PC-3 (cell line): ENCODE measurements at regions of chr11 and their contacts with region 1.

Region 1: DNA sequence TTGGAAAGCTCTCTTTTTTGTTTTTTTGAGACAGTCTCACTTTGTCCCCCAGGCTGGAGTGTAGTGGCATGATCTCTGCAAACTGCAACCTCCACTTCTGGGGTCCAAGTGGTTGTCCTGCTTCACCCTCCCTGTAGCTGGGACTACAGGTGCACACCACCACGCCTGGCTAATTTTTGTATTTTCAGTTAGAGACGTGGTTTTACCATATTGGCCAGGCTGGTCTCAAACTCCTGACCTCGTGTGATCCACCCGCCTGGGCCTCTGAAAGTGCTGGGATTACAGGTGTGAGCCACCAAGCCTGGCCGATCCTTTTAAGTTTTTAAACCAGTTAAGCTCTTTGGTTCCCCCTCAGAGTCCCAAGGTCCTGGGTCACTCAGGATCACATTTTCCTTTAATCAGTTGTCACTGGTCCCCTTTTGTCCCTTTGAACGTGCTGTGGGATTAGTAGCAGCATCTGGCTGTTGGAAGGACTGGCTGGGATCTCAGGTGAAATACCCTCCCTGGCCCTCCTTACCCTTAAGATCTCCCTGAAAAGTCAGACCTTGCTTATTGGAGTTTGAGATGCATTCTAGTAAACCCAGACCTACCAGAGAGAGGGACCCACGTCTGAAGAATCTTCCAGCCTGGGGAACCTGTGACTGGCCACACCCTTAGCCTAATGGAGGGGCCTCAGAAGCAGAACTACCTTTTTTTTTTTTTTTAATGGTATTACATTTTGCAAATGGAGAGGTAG is 8.1 kb downstream of the MALAT1 start:
- DNase-seq: peak; percentile 56
- ATAC-seq: peak; percentile 42
- H3K4me3 ChIP-seq: no peak overlapping the region
- H3K27ac ChIP-seq: peak overlapping the region; percentile 52
- H3K4me1 ChIP-seq: peaks cover 45% of the 10 kb centered on the region
- H3K27me3 ChIP-seq: no peaks in the 10 kb centered on the region
- CTCF ChIP-seq: no peak

Region 2: GRCh38 chr11:65251476-65251875 is 255.5 kb before region 1 on chr11:
- CTCF ChIA-PET with region 1: no interaction called
- POLR2A ChIA-PET with region 1: interaction called, 10 read pairs
- intact Hi-C with region 1: no loop called
- DNase-seq: peak; percentile 19
- ATAC-seq: no peak
- H3K4me3 ChIP-seq: no peak overlapping the region
- H3K27ac ChIP-seq: no peak overlapping the region
- H3K4me1 ChIP-seq: no peaks in the 10 kb centered on the region; the same call in 1 of the 2 replicates
- H3K27me3 ChIP-seq: no peaks in the 10 kb centered on the region
- CTCF ChIP-seq: no peak

Region 3: DNA sequence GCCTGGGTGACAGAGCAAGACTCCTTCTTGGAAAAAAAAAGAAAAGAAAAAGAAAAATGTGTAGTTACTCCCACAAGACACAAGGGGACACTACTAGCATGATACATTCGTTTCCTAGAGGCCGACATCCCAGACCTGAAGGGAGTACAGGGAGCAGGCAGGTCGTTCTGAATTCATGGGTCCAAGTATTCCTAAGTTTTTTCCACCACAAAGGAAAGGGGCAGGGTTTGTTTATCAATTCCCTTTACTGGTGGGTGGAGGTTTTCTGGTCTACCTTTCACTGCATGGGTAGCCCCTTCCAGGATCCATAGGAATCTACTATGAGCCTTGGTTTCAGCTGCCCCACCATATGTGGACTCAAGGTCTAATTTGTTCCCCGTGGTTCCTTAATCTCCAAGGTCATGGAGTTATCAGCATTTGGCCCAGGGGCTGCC is 140.6 kb before region 1 on chr11:
- CTCF ChIA-PET with region 1: no interaction called
- POLR2A ChIA-PET with region 1: no interaction called
- intact Hi-C with region 1: loop called (anchors 1 kb)
- DNase-seq: peak; percentile 86
- ATAC-seq: peak; percentile 63
- H3K4me3 ChIP-seq: no peak overlapping the region
- H3K27ac ChIP-seq: peak overlapping the region; percentile 6; the same call in 1 of the 2 replicates
- H3K4me1 ChIP-seq: peaks cover 8% of the 10 kb centered on the region
- H3K27me3 ChIP-seq: no peaks in the 10 kb centered on the region
- CTCF ChIP-seq: peak; percentile 75

Region 4: GRCh38 chr11:65418711-65419459 is 88.1 kb before region 1 on chr11:
- CTCF ChIA-PET with region 1: interaction called, 6 read pairs
- POLR2A ChIA-PET with region 1: interaction called, 46 read pairs
- intact Hi-C with region 1: loop called (anchors 1 kb)
- DNase-seq: peak; percentile 98
- ATAC-seq: peak; percentile 25
- H3K4me3 ChIP-seq: peak overlapping the region; percentile 41
- H3K27ac ChIP-seq: peak overlapping the region; percentile 99
- H3K4me1 ChIP-seq: peaks cover 53% of the 10 kb centered on the region
- H3K27me3 ChIP-seq: no peaks in the 10 kb centered on the region
- CTCF ChIP-seq: no peak

Region 5: DNA sequence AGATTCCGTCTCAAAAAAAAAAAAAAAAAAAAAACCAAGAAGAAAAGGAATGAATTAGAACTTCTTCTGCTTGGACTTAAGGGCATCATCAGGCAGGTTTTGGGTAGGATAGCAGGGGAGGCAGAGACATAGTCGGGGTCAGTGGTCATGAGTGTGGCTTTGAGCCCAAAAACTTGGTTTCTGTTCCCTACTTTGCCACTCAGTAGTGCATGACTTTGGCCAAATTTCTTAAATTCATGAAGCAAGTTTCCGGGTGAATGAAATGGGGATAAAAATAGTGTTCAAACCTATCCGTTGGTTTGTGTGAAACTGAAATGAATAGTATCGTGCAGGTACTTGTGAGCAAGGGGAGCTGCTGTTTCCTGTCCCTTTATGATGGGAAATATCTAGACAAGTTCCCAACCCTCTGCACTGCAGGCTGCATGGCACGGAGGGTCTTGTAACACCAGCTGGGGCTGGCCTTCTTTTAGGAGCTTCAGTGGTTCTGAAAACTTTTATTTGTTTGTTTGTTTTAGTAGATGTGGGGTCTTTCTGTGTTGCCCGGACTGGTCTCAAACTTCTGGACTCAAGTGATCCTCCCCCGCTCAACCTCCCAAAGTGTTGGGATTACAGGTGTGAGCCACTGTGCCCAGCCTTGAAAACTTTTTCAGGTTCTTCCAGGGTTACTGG is 66.0 kb before region 1 on chr11:
- CTCF ChIA-PET with region 1: interaction called, 6 read pairs
- POLR2A ChIA-PET with region 1: interaction called, 16 read pairs
- intact Hi-C with region 1: loop called (anchors 2 kb)
- DNase-seq: peak; percentile 4
- ATAC-seq: no peak
- H3K4me3 ChIP-seq: no peak overlapping the region
- H3K27ac ChIP-seq: no peak overlapping the region
- H3K4me1 ChIP-seq: no peaks in the 10 kb centered on the region
- H3K27me3 ChIP-seq: no peaks in the 10 kb centered on the region
- CTCF ChIP-seq: no peak

Region 6: GRCh38 chr11:65471410-65471762 is 35.6 kb before region 1 on chr11:
- CTCF ChIA-PET with region 1: interaction called, 4 read pairs
- POLR2A ChIA-PET with region 1: interaction called, 19 read pairs
- intact Hi-C with region 1: no loop called
- DNase-seq: peak; percentile 59
- ATAC-seq: peak; percentile 30
- H3K4me3 ChIP-seq: peak overlapping the region; percentile 5; the same call in 1 of the 2 replicates
- H3K27ac ChIP-seq: peak overlapping the region; percentile 95
- H3K4me1 ChIP-seq: peaks cover 36% of the 10 kb centered on the region
- H3K27me3 ChIP-seq: no peaks in the 10 kb centered on the region
- CTCF ChIP-seq: peak; percentile 66

Region 7: GRCh38 chr11:65487413-65488272 is 19.3 kb before region 1 on chr11:
- CTCF ChIA-PET with region 1: interaction called, 5 read pairs
- POLR2A ChIA-PET with region 1: interaction called, 11 read pairs
- intact Hi-C with region 1: no loop called
- DNase-seq: peak; percentile 94
- ATAC-seq: peak; percentile 59
- H3K4me3 ChIP-seq: no peak overlapping the region
- H3K27ac ChIP-seq: peak overlapping the region; percentile 29
- H3K4me1 ChIP-seq: peaks cover 40% of the 10 kb centered on the region
- H3K27me3 ChIP-seq: no peaks in the 10 kb centered on the region
- CTCF ChIP-seq: no peak